Activated B cell treated with CpG ODN at 0.5 μM for 24 hours (primary cell): ENCODE measurements at regions of chr14 and their contacts with region 1.

Region 1: DNA sequence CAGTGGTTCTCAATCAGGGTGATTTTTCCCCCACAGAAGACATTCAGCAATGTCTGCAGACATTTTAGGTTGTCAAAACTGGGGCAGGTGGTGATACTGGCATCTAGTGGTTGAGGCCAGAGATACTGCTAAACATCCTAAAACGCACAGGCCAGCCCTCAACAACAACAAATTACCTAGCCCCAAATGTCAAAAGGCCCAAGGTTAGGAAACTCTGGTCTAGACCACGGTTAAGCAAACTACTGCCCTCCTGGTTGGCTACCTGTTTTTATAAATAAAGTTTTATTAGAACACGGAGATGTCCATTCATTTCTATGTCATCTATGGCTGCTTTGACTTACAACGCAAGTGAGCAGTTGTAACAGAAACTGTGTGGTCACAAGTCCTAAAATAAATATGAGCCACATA is 186.7 kb downstream of the EFCAB11 start:
- DNase-seq: peak; percentile 28
- ATAC-seq: peak; percentile 92
- H3K4me3 Mint-ChIP-seq: no peak overlapping the region
- H3K27ac Mint-ChIP-seq: peak overlapping the region; percentile 67
- H3K4me1 Mint-ChIP-seq: peaks cover 31% of the 10 kb centered on the region
- H3K27me3 Mint-ChIP-seq: no peaks in the 10 kb centered on the region
- CTCF ChIP-seq: peak; percentile 20

Region 2: DNA sequence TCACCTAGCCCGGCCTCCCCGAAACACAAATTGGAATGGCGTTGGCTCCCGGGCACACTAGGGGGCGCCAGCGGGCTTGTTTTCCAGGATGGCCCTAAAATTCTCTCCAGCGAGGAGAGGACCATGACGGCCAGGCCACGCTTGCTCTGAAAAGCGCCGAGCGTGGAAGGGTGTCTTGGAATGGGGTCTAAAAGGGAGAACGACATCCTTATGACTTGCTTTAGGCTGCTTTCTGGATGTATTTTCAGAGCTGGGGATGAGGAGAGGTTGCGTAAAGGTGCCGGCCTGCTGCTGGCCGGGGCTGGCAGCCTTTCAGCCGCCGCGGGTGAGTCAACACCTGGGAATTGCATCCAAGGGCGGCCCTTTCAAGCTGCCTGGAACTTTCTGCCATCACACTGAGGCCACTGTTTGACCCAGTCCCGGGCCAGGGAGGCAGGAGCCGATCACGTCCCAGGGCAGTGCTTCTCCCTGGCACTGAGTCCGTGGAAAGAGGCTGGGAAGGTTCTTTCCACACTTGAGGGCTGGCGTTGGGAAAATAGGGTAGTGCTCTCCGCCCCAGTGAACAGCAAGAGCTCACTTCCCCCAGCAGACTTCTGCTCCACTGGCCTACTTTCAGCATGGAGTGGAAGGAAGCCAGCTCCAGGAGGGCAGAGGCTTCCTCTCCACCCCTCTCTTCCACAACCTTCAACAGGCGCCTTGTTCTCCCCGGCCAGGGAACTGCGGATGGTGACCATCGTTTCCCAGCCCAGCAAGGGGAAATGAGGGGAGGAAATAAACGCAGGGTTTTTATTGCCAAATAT is 727.2 kb before region 1 on chr14:
- CTCF ChIA-PET with region 1: interaction called, 13 read pairs
- POLR2A ChIA-PET with region 1: no interaction called
- intact Hi-C with region 1: loop called (anchors 1 kb)
- DNase-seq: peak; percentile 76
- ATAC-seq: peak; percentile 71
- H3K4me3 Mint-ChIP-seq: peak overlapping the region; percentile 81
- H3K27ac Mint-ChIP-seq: no peak overlapping the region
- H3K4me1 Mint-ChIP-seq: peaks cover 14% of the 10 kb centered on the region
- H3K27me3 Mint-ChIP-seq: peaks cover 34% of the 10 kb centered on the region
- CTCF ChIP-seq: peak; percentile 95

Region 3: DNA sequence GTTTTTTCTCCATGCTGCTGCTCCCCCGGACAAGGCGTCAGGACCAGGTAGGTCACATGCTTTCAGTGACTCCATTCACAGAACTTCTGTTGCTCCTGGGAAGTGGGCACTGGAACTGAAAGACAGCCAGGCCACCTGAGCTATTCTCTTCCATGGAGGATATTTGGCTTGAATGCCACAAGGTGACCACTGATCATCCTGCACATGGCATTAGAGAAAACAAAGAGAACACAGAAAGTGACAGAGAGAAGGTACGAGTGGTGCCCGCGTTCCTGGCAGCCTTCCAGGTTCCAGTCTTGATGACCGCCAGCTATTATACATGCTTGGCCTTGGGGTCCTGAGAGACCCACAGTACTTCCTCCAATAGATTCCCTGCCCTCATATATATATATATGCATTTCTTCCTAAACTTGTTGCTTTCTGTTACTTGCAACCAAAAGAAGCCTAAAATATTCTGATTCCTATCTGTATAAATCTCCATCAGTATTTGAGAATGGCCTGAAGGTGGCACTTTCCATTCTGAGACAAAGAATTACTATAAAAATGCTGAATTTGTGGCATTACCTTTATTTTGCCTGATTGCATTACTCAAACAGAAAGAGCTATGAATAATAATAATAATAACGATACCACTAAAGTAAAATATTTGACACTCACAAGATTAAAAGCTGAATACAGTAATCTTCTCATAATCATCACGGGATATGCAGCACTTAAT is 525.8 kb before region 1 on chr14:
- CTCF ChIA-PET with region 1: interaction called, 3 read pairs
- POLR2A ChIA-PET with region 1: no interaction called
- intact Hi-C with region 1: loop called (anchors 1 kb)
- DNase-seq: no peak
- ATAC-seq: no peak
- H3K4me3 Mint-ChIP-seq: peak overlapping the region; percentile 4
- H3K27ac Mint-ChIP-seq: peak overlapping the region; percentile 3
- H3K4me1 Mint-ChIP-seq: peaks cover 56% of the 10 kb centered on the region
- H3K27me3 Mint-ChIP-seq: no peaks in the 10 kb centered on the region
- CTCF ChIP-seq: no peak

Region 4: DNA sequence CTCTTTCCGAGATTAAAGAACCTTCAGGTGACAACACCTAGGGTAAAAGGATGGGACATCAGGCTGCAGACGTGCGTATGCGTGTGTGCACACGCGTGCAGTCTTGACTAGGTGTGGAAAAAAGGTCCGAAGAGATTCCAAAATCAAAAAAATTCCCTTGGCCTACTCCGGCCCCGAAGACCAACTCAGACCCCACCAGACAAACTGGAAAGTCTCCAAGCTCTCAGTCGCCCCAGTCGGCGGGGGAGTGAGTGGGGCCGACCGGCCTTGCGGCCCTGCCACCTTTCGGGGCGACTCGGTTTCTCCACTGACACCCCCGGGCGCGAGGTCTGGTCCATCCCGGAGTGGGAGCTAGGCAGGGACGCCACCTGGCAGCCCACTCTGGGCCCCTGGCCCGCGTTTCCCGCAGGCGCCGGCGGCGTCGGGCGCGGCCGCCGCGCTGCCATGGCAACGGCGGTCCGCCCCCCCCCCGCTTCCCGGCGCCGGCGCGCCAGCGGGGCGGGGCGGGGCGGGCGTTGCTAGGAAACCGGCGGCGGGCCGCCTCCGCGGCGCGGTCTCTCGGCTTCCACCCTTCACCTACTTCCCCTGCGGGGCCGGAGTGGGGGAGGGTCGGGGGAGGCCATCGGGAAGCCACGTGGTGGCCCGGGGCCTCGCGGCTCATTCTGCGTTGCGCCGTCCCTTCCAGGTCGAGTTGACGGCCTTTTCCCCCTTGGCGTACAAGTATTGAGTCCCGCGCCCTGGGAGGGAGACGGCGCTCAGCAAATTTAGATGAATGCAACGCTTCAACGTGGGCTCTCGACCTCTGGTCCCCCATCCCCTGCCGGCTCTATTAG is 66.4 kb before region 1 on chr14:
- CTCF ChIA-PET with region 1: no interaction called
- POLR2A ChIA-PET with region 1: no interaction called
- intact Hi-C with region 1: loop called (anchors 1 kb)
- DNase-seq: peak; percentile 81
- ATAC-seq: peak; percentile 95
- H3K4me3 Mint-ChIP-seq: peak overlapping the region; percentile 77
- H3K27ac Mint-ChIP-seq: peak overlapping the region; percentile 86
- H3K4me1 Mint-ChIP-seq: peaks cover 28% of the 10 kb centered on the region
- H3K27me3 Mint-ChIP-seq: no peaks in the 10 kb centered on the region
- CTCF ChIP-seq: no peak